MCF 10A (cell line): ENCODE measurements at regions of chr2 and their contacts with region 1.

Region 1: DNA sequence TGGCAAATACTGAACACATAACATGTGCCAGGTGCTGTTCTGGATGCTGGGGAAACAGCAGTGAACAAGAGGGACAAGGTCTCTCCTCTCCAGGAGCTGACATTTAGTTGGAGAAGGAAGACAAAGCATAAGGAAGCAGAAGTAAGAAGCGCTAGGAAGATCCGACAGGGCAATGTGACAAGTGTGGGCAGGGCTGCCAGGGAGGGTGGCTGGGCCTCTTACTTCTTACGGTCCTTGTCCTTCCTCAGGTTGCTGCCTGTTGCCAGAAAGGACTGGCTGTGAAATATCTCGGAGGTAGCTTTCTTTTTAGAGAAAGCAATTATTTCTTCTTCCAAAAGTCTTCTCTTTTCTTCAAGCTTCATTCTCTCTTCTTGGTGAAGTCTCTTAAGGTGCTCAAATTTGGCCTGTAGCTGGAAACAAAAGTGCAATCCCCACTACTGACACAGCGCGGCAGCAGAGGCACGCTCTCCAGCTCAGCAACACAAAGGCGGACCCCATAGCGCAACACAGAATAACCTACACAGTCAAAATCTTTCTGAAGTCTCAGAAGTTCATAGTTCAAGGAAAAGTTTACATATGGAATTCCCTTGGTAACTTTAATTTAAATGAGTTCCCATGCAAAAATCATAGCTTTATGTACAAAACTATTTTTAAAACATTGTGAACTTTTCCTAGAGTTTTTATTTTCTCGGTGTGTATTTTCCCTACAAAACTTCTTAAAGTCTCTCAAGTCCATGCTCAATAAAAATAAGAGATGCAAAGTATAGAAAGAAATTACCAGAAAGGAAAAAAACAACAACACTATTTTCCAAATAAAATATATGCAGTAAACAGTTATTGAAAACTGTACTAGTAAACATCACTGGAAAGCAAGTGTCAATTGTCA is 67.7 kb downstream of the SEPTIN10 start:
- DNase-seq: peak; percentile 62
- H3K4me3 Mint-ChIP-seq: no peak overlapping the region
- H3K27ac Mint-ChIP-seq: no peak overlapping the region
- H3K4me1 Mint-ChIP-seq: peaks cover 4% of the 10 kb centered on the region
- H3K27me3 Mint-ChIP-seq: no peaks in the 10 kb centered on the region
- CTCF ChIP-seq: peak; percentile 95

Region 2: GRCh38 chr2:109475531-109476210 is 70.4 kb before region 1 on chr2:
- CTCF ChIA-PET with region 1: no interaction called
- POLR2A ChIA-PET with region 1: no interaction called
- intact Hi-C with region 1: no loop called
- DNase-seq: peak; percentile 58
- H3K4me3 Mint-ChIP-seq: no peak overlapping the region
- H3K27ac Mint-ChIP-seq: peak overlapping the region; percentile 57
- H3K4me1 Mint-ChIP-seq: peaks cover 7% of the 10 kb centered on the region
- H3K27me3 Mint-ChIP-seq: no peaks in the 10 kb centered on the region
- CTCF ChIP-seq: no peak

Region 3: GRCh38 chr2:109535217-109535946 is 10.7 kb before region 1 on chr2:
- CTCF ChIA-PET with region 1: interaction called, 26 read pairs
- POLR2A ChIA-PET with region 1: interaction called, 4 read pairs
- intact Hi-C with region 1: no loop called
- DNase-seq: no peak
- H3K4me3 Mint-ChIP-seq: no peak overlapping the region
- H3K27ac Mint-ChIP-seq: no peak overlapping the region
- H3K4me1 Mint-ChIP-seq: no peaks in the 10 kb centered on the region
- H3K27me3 Mint-ChIP-seq: no peaks in the 10 kb centered on the region
- CTCF ChIP-seq: no peak

Region 4: GRCh38 chr2:109594246-109594885 is 48.3 kb after region 1 on chr2:
- CTCF ChIA-PET with region 1: interaction called, 11 read pairs
- POLR2A ChIA-PET with region 1: no interaction called
- intact Hi-C with region 1: no loop called
- DNase-seq: peak; percentile 14
- H3K4me3 Mint-ChIP-seq: no peak overlapping the region
- H3K27ac Mint-ChIP-seq: no peak overlapping the region
- H3K4me1 Mint-ChIP-seq: peaks cover 16% of the 10 kb centered on the region
- H3K27me3 Mint-ChIP-seq: no peaks in the 10 kb centered on the region
- CTCF ChIP-seq: no peak

Region 5: DNA sequence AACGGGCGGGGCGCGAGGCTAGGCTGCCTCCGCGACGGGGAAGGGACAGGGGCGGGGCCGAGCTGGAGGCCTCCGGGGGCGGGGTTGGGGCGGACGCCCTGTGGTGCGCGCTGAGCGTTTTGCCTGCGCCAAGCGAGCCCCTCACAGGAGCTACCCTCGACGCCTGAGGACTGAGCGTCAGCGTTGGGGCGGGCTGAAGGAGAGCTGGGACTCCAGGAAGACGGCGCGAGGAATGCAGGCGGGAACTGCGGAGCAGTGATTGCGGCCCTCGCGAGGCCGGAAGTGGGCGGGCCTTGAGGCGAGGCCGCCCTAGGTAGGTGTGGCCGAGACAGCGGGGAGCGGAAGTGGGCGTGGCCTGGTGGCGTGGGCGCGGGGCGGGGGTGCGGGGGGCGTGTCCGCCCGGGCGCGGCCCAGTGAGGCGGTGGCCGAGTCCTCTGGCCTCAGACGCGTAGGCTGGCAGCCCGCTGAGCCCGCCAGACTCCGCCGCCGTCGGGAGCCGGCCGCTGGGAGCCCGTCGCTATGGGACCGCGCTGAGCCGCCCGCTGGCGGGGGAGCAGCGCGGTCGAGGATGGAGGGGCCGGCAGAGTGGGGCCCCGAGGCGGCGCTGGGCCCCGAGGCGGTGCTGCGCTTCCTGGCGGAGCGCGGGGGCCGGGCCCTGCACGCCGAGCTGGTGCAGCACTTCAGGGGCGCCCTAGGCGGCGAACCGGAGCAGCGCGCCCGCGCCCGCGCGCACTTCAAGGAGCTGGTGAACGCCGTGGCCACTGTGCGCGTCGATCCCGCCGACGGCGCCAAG is 68.0 kb after region 1 on chr2 and contains the starts of genes SEPTIN10 and SOWAHC:
- CTCF ChIA-PET with region 1: interaction called, 10 read pairs
- POLR2A ChIA-PET with region 1: interaction called, 8 read pairs
- intact Hi-C with region 1: loop called (anchors 1 kb)
- DNase-seq: peak; percentile 99
- H3K4me3 Mint-ChIP-seq: peak within 1 kb of the TSS; percentile 96
- H3K27ac Mint-ChIP-seq: peak within 1 kb of the TSS; percentile 96
- H3K4me1 Mint-ChIP-seq: peaks cover 16% of the 10 kb centered on the region
- H3K27me3 Mint-ChIP-seq: no peaks in the 10 kb centered on the region
- CTCF ChIP-seq: no peak
- total RNA-seq, gene SEPTIN10: 78.9 and 105 TPM in 2 replicates
- total RNA-seq, gene SOWAHC: 25.6 and 35.3 TPM in 2 replicates

Region 6: DNA sequence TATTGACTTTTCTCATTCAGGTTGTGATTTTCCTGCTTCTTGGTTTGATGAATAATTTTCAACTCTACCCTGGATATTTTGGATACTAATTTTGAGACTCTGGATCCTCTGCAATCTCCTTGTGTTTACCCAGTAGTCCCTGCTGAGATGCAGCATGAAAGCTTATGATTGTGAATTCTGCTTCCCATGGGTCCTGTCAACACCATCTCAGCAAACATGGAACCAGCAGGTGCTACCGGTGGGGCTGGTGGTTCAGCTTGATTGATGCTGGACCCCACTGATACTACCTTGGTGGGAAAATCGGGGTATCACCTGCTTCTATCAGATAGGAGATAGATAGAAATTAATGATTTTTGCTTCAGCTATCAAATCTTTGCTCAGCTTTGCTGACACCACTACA is 149.2 kb after region 1 on chr2:
- CTCF ChIA-PET with region 1: interaction called, 11 read pairs
- POLR2A ChIA-PET with region 1: no interaction called
- intact Hi-C with region 1: no loop called
- DNase-seq: no peak
- H3K4me3 Mint-ChIP-seq: no peak overlapping the region
- H3K27ac Mint-ChIP-seq: no peak overlapping the region
- H3K4me1 Mint-ChIP-seq: peaks cover 33% of the 10 kb centered on the region
- H3K27me3 Mint-ChIP-seq: no peaks in the 10 kb centered on the region
- CTCF ChIP-seq: no peak

Region 7: DNA sequence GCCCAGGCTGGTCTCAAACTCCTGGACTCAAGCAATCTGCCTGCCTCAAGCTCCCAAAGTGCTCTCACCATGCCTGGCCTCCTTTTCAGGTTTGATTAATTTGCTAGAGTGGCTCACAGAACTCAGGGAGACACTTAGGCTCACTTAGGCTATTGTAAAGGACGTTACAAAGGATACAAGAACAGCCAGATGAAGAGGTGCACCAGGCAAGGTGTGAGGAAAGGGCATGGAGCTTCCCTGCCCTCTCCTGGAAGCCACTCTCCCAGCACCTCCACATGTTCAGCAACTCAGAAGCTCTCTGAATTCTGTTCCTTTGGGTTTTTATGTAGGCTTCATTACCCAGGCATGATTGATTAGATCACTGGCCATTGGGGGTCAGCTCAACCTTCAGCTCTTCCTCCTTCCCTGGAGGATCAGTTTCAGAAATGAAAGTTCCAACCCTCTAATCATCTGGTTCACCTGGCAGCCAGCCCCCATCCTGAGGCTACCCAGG is 169.3 kb after region 1 on chr2:
- CTCF ChIA-PET with region 1: interaction called, 155 read pairs
- POLR2A ChIA-PET with region 1: interaction called, 4 read pairs
- intact Hi-C with region 1: loop called (anchors 1 kb)
- DNase-seq: peak; percentile 68
- H3K4me3 Mint-ChIP-seq: no peak overlapping the region
- H3K27ac Mint-ChIP-seq: no peak overlapping the region
- H3K4me1 Mint-ChIP-seq: no peaks in the 10 kb centered on the region
- H3K27me3 Mint-ChIP-seq: no peaks in the 10 kb centered on the region
- CTCF ChIP-seq: peak; percentile 78